IMR-90 (cell line): ENCODE measurements at regions of chr6 and their contacts with region 1.

Region 1: GRCh38 chr6:4936681-4937041 is 67.2 kb downstream of the RPP40 start:
- DNase-seq: peak; percentile 80
- ATAC-seq: peak; percentile 69
- H3K4me3 ChIP-seq: no peak overlapping the region
- H3K27ac ChIP-seq: no peak overlapping the region
- H3K4me1 ChIP-seq: peaks cover 12% of the 10 kb centered on the region
- H3K27me3 ChIP-seq: no peaks in the 10 kb centered on the region
- CTCF ChIP-seq: peak; percentile 72
- POLR2A ChIP-seq: no peak
- RAD21 ChIP-seq: peak; percentile 76

Region 2: GRCh38 chr6:4581796-4582385 is 354.8 kb before region 1 on chr6:
- CTCF ChIA-PET with region 1: no interaction called
- POLR2A ChIA-PET with region 1: no interaction called
- dilution Hi-C with region 1: no loop called
- in situ Hi-C with region 1: no loop called
- intact Hi-C with region 1: loop called (anchors 2 kb)
- DNase-seq: peak; percentile 95
- ATAC-seq: peak; percentile 90
- H3K4me3 ChIP-seq: no peak overlapping the region
- H3K27ac ChIP-seq: peak overlapping the region; percentile 87
- H3K4me1 ChIP-seq: peaks cover 19% of the 10 kb centered on the region
- H3K27me3 ChIP-seq: no peaks in the 10 kb centered on the region
- CTCF ChIP-seq: no peak
- POLR2A ChIP-seq: no peak
- RAD21 ChIP-seq: peak; percentile 1; the same call in 1 of the 2 replicates

Region 3: DNA sequence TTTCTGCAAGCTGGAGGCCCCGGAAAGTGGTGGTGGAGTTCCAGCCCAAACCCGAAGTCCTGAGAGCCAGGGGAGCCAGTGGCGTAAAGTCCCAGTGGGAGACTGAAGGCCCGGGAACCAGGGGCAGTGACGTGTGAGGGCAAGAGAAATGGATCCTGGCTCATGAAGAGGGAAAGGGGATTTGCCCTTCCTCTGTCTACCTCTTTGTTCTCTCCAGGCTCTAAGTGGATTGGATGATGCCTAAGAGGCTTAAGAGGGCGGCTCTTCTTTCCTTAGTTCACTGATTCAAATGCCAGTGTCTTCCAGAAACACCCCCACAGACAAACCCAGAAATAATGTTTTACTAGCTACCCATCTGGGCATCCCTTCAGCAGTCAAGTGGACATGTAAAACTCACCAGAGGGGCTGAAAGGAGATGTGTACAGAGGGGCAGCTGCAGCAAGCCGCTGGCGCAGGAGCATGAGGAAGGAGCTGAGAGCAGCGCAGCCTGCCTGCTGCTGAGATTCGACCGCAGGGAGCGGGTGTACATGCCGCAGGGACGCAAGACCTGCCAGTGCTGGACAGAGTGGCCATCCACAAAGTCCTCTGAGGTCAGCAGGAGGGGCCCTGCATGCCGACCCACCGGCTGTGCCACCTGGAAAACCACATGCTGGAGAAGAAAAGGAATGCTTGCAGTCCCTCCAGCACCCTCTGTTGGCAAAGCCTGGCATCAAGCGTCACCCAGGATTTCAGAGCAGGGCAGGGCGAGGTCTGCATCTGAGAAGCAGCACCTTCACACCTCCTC is 130.9 kb before region 1 on chr6:
- CTCF ChIA-PET with region 1: no interaction called
- POLR2A ChIA-PET with region 1: no interaction called
- dilution Hi-C with region 1: no loop called
- in situ Hi-C with region 1: no loop called
- intact Hi-C with region 1: no loop called
- DNase-seq: peak; percentile 35
- ATAC-seq: peak; percentile 55
- H3K4me3 ChIP-seq: no peak overlapping the region
- H3K27ac ChIP-seq: no peak overlapping the region
- H3K4me1 ChIP-seq: peaks cover 8% of the 10 kb centered on the region
- H3K27me3 ChIP-seq: no peaks in the 10 kb centered on the region
- CTCF ChIP-seq: peak; percentile 53
- POLR2A ChIP-seq: no peak
- RAD21 ChIP-seq: peak; percentile 56